ENCODE measurements at regions of chr7 and their contacts with region 1.

Region 1: DNA sequence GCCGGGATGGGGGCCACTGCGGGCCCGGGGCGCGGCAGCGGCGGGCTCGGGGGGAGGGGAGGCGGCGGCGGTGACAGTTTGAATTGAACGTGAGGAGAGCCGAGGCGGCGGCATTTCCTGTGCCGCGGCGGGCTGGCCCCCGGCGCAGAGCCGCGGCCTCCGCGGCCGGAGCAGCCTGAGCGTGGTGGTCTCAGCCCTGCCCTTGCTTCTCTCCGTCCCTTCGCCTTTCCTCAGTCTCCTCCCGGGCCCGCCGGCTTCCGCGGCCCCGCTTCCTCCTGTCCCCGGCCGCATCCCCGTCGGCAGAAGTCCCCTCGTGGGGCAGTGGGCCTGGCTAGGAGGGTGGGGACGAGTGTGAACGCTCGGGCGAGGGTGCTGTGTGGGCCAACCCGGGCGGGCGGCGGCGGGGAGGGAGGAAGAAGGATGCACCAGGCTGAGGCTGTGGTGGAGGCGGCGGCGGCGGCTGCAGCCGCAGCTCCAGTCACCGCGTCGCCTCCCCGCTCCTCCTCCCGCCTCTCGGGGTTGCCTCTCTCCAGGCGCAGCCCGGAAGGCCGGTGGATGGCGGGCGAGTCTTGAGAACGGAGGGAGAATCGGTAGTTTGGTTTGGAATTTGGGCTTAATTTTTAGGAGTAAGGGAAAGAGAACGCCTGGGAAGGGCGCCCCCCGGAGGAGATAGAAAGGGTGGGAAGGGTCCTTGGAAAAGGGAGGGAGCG is 690 bp downstream of the SEPTIN7 start:
- DNase-seq: peak; percentile 83
- ATAC-seq: peak; percentile 49
- H3K4me3 Mint-ChIP-seq: peak overlapping the region; percentile 98
- H3K27ac Mint-ChIP-seq: peak overlapping the region; percentile 99
- H3K4me1 Mint-ChIP-seq: peaks cover 45% of the 10 kb centered on the region
- H3K27me3 Mint-ChIP-seq: peaks cover 2% of the 10 kb centered on the region

Region 2: DNA sequence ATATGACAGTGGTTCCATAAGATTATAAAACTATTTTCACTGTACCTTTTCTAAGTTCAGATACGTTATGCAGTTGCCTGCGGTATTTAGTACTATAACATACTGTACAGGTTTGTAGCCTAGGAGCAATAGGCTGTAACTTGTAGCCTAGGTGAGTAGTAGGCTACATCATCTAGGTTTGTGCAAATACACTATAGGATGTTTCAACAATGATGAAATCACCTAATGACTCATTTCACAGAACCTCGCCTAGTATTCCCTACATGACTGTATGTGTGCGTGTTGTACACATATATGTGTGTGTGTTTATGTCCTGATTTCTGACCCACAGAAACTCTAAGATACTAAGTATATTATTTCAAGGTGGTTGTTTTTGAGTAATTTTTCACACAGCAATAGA is 245.6 kb before region 1 on chr7:
- CTCF ChIA-PET with region 1: no interaction called
- POLR2A ChIA-PET with region 1: no interaction called
- DNase-seq: no peak
- ATAC-seq: no peak
- H3K4me3 Mint-ChIP-seq: no peak overlapping the region
- H3K27ac Mint-ChIP-seq: no peak overlapping the region
- H3K4me1 Mint-ChIP-seq: peaks cover 10% of the 10 kb centered on the region
- H3K27me3 Mint-ChIP-seq: peaks cover 6% of the 10 kb centered on the region

Region 3: DNA sequence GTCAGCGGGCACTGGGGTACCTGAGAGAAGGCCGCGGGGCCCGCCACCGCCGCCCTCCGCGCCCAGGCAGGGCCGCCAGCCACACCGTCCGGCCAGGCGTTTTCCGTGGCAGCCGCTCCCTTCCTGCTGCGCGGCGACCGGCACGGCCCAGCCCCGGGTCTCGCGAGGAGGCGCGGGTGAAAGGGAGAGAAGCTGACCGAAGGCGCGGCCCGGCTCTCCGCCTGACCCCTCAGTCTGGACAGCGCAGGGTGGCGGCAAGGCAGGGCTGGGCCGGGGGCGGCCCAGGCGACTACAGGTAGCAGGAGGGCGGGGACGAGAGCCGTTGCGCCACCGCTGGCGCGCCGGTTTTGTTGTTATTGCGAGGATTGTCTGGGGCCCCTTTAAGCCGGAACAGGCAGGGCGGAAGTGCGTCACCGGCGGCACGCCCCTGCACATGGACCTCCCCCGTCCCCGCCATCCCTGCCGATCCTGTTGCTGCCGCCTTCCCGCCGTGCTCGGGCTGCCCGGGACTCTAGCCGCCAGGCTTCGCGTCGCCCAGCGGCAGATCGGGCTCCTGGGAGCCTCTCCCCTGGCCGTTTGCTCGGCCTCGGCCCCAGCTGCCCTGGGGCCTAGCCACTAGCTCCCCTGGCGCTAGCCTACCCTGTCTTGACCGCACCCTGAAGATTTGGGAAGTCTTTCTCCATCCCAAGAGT is 106.6 kb before region 1 on chr7 and contains the start of gene HERPUD2:
- CTCF ChIA-PET with region 1: interaction called, 13 read pairs
- POLR2A ChIA-PET with region 1: interaction called, 132 read pairs
- DNase-seq: peak; percentile 94
- ATAC-seq: peak; percentile 84
- H3K4me3 Mint-ChIP-seq: peak within 1 kb of the TSS; percentile 85
- H3K27ac Mint-ChIP-seq: peak within 1 kb of the TSS; percentile 98
- H3K4me1 Mint-ChIP-seq: peaks cover 37% of the 10 kb centered on the region
- H3K27me3 Mint-ChIP-seq: no peaks in the 10 kb centered on the region
- total RNA-seq, gene HERPUD2: 30.4 to 31.3 TPM

Region 4: DNA sequence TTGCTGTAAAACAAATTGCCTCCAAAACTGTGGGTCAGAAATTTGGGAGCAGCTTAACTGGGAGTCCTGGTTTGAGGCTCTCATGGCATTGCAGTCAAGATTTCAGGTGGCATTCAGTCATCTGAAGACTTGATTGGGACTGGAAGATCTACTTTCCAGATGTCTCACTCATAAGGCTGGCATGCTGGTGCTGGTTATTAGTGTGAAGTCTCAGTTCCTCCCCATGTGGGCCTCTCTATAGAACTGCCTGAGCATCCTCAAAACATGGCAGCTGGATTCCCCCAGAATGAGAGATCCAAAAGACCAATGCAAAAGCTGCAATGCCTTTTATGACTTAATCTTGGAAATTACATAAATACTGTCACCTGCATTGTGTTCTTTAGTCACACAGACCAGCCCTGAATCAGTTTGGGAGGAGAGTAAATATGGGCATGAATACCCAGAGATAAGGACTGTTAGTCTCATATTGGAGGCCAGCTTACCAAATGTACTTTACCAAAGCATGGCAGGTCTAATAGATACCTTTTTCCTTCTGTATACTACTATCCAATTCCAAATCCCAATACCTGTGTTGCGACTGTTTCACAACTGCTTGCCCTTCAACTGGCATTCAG is 100.2 kb before region 1 on chr7:
- CTCF ChIA-PET with region 1: interaction called, 13 read pairs
- POLR2A ChIA-PET with region 1: interaction called, 132 read pairs
- DNase-seq: no peak
- ATAC-seq: no peak
- H3K4me3 Mint-ChIP-seq: no peak overlapping the region
- H3K27ac Mint-ChIP-seq: no peak overlapping the region
- H3K4me1 Mint-ChIP-seq: peaks cover 24% of the 10 kb centered on the region
- H3K27me3 Mint-ChIP-seq: no peaks in the 10 kb centered on the region

Region 5: GRCh38 chr7:35714862-35715261 is 86.7 kb before region 1 on chr7:
- CTCF ChIA-PET with region 1: interaction called, 15 read pairs
- POLR2A ChIA-PET with region 1: interaction called, 6 read pairs
- DNase-seq: no peak
- ATAC-seq: no peak
- H3K4me3 Mint-ChIP-seq: no peak overlapping the region
- H3K27ac Mint-ChIP-seq: no peak overlapping the region
- H3K4me1 Mint-ChIP-seq: peaks cover 19% of the 10 kb centered on the region
- H3K27me3 Mint-ChIP-seq: peaks cover 4% of the 10 kb centered on the region

Region 6: DNA sequence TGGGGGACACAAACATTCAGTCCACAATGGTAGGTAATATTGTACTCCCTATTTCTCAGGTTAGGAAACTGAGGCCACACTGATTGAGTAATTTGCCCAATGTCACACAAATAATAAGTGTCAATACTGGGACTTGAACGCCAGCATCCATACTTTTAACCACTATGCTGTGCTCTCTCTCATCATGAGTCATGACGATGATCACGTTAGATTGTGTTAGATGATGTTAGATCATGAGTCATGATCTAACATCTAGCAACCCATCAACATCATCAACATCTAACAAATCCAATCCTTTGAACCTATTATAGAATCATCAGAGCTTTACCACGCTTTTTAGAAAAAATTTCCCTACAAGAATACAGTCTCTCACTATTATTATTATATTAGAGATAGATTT is 78.5 kb before region 1 on chr7:
- CTCF ChIA-PET with region 1: interaction called, 10 read pairs
- POLR2A ChIA-PET with region 1: interaction called, 56 read pairs
- DNase-seq: no peak
- ATAC-seq: peak; percentile 14
- H3K4me3 Mint-ChIP-seq: no peak overlapping the region
- H3K27ac Mint-ChIP-seq: no peak overlapping the region
- H3K4me1 Mint-ChIP-seq: peaks cover 54% of the 10 kb centered on the region
- H3K27me3 Mint-ChIP-seq: peaks cover 2% of the 10 kb centered on the region

Region 7: DNA sequence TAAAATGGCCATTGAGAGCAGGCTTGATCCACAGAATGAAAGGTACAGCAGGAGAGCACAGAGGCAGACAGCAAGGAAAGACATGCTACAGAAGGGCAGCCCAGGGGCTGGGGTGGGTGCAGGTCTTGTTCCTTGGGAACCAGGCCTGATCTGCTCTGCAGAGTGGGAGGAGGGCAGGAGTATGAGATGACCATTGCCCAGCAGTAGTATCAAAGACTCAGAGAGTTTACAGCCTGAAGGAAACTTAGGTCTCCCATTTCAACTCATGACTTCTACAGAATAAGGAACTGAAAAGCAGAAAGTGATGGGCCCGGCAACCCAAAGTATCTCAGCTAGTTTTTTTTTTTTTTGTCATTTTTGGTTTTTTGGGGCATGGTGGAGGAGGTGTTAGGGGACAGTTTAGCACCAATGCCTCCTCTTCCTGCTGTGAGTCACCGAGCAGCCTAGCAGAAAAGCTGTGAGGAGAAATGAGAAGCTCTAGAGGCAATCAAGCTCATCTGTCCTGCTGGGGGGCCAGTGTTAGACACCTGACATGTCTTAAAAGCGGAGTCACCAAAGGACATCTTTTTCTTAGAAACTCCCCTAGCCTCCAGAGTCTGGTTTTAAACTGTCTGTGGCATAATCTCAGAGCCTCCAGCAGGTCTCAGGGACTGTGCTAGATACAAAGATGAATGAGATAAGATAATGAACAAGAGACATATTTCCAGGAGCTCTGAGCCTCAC is 72.3 kb before region 1 on chr7:
- CTCF ChIA-PET with region 1: interaction called, 10 read pairs
- POLR2A ChIA-PET with region 1: interaction called, 56 read pairs
- DNase-seq: peak; percentile 64
- ATAC-seq: peak; percentile 53
- H3K4me3 Mint-ChIP-seq: peak overlapping the region; percentile 34
- H3K27ac Mint-ChIP-seq: peak overlapping the region; percentile 78
- H3K4me1 Mint-ChIP-seq: peaks cover 62% of the 10 kb centered on the region
- H3K27me3 Mint-ChIP-seq: peaks cover 1% of the 10 kb centered on the region

Region 8: DNA sequence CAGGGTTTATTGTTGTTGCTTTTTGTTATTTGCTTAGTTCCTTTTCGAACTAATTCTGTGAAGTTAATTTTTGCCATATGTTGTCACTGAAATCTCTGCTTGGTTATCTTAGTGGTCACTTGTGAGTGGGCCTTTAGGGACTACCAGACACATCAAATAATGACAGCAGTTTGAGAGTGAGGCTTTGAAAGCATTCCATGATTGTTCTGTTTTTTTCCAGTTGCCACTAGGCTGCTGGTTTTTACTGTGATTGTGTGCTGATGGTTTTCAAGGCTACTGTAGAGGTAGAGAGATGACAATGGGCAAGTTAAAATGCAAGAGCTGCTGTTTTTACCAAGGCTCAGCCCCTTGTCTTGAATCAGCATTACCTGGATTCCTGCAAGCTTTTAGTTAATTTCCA is 19.3 kb after region 1 on chr7:
- CTCF ChIA-PET with region 1: interaction called, 6 read pairs
- POLR2A ChIA-PET with region 1: interaction called, 10 read pairs
- DNase-seq: no peak
- ATAC-seq: no peak
- H3K4me3 Mint-ChIP-seq: no peak overlapping the region
- H3K27ac Mint-ChIP-seq: no peak overlapping the region
- H3K4me1 Mint-ChIP-seq: peaks cover 53% of the 10 kb centered on the region
- H3K27me3 Mint-ChIP-seq: no peaks in the 10 kb centered on the region

Region 9: DNA sequence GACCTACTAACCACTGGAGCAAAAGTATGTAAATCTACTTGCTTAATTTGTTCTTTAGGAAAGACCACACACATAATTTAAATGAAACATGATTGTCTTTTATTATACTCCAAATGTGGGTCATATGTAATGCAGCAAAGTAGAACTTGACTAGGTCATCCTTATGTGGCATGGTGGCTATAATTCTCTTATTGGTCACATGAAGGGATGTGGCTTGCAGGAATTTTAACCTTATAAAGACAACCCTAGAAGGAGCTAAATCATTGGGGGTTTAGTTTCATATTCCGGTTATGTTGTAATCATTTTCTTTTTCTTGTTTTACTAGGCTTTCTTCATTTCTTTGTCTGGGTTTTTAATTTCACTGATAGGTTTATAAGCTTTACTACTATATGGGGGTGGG is 93.2 kb after region 1 on chr7:
- CTCF ChIA-PET with region 1: no interaction called
- POLR2A ChIA-PET with region 1: no interaction called
- DNase-seq: no peak
- ATAC-seq: no peak
- H3K4me3 Mint-ChIP-seq: no peak overlapping the region
- H3K27ac Mint-ChIP-seq: no peak overlapping the region
- H3K4me1 Mint-ChIP-seq: peaks cover 11% of the 10 kb centered on the region
- H3K27me3 Mint-ChIP-seq: no peaks in the 10 kb centered on the region

Measured in activated CD8-positive, alpha-beta T cell treated with anti-CD3 and anti-CD28 coated beads, Interleukin-2, amount 10 ng/mL, durations not matched to agents 7 days and 5 days (primary cell).